Naive thymus-derived CD4-positive, alpha-beta T cell (primary cell): ENCODE measurements at regions of chr3 and their contacts with region 1.

Region 1: DNA sequence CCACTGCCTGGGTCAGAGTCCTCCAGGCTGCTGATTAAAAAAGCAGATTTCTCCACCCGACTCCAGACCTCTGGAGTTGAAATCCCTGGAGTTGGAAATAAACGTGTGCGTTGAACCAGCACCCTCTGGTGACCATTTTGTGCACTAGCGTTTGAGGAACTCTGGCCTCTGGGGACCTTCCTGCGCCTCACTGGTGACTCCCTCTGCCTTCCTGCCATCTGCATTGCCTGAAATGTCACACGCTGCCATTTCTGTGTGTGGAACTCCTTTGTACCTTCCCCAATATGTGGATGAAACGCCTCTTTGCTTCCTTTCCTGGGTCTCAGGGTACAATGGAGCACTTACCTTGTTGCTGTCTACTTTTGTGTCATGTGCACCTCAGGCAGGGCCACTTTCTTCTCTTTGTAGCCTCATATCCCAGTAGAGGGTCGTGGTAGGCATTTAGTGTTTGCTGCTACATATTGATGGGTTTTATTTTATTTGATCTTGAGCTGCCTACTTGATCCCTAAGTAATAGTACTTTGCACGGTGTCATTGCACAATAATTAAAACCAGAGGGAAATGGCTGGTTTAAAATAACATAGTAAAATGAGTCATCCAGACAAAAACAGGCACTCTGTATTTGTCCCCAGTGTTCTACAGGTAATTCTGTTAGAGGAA is 56.8 kb downstream of the GPR171 start:
- DNase-seq: peak; percentile 25 to 63 (median 36)
- ATAC-seq: peak; percentile 92
- H3K4me3 ChIP-seq: no peak overlapping the region
- H3K4me3 Mint-ChIP-seq: no peak overlapping the region
- H3K27ac ChIP-seq: no peak overlapping the region
- H3K27ac Mint-ChIP-seq: no peak overlapping the region
- H3K4me1 ChIP-seq: peaks cover 0 to 3% of the 10 kb centered on the region in 2 donors
- H3K4me1 Mint-ChIP-seq: peaks cover 0 to 4% (median 0%) of the 10 kb centered on the region in 7 donors
- H3K27me3 ChIP-seq: no peaks in the 10 kb centered on the region
- H3K27me3 Mint-ChIP-seq: peaks cover 0 to 29% (median 11%) of the 10 kb centered on the region in 5 donors

Region 2: DNA sequence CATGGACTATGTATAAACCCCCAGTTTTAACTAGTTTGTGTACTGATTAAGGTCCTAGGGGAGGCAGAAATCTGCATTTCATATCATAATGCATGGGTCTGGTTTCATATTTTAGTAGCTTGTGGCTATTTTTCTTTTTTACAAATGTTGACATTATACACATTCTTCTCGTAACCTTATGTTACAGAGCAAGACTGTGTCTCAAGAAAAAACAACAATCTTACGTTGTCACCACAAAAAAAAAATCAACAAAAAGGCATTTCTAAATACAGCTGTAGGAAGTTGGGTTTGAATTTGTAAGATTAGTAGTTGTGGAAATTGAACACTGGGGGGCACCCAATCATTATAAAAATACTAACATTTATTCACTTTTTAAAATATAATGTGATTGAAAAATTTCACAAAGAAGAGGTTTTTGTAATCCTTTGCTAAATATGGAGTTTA is 617.8 kb before region 1 on chr3:
- CTCF ChIA-PET with region 1: no interaction called
- POLR2A ChIA-PET with region 1: no interaction called
- intact Hi-C with region 1: loop called (anchors 1 to 5 kb)
- DNase-seq: peak in 4 of 9 donors; percentile 23 to 37 (median 28)
- ATAC-seq: peak; percentile 42
- H3K4me3 ChIP-seq: no peak overlapping the region
- H3K4me3 Mint-ChIP-seq: no peak overlapping the region
- H3K27ac ChIP-seq: no peak overlapping the region
- H3K27ac Mint-ChIP-seq: no peak overlapping the region
- H3K4me1 ChIP-seq: no peaks in the 10 kb centered on the region
- H3K4me1 Mint-ChIP-seq: peaks cover 0 to 8% (median 5%) of the 10 kb centered on the region in 7 donors
- H3K27me3 ChIP-seq: no peaks in the 10 kb centered on the region
- H3K27me3 Mint-ChIP-seq: peaks cover 0 to 21% (median 0%) of the 10 kb centered on the region in 5 donors

Region 3: GRCh38 chr3:150787741-150788370 is 358.3 kb before region 1 on chr3:
- CTCF ChIA-PET with region 1: interaction called, 5 read pairs
- POLR2A ChIA-PET with region 1: no interaction called
- intact Hi-C with region 1: loop called (anchors 1 kb)
- DNase-seq: peak; percentile 45 to 77 (median 63)
- ATAC-seq: peak; percentile 92
- H3K4me3 ChIP-seq: no peak overlapping the region
- H3K4me3 Mint-ChIP-seq: peak overlapping the region in 2 of 10 donors; percentile 24 to 50
- H3K27ac ChIP-seq: no peak overlapping the region
- H3K27ac Mint-ChIP-seq: no peak overlapping the region
- H3K4me1 ChIP-seq: no peaks in the 10 kb centered on the region
- H3K4me1 Mint-ChIP-seq: peaks cover 0 to 22% (median 4%) of the 10 kb centered on the region in 7 donors
- H3K27me3 ChIP-seq: no peaks in the 10 kb centered on the region
- H3K27me3 Mint-ChIP-seq: peaks cover 0 to 9% (median 4%) of the 10 kb centered on the region in 5 donors

Region 4: DNA sequence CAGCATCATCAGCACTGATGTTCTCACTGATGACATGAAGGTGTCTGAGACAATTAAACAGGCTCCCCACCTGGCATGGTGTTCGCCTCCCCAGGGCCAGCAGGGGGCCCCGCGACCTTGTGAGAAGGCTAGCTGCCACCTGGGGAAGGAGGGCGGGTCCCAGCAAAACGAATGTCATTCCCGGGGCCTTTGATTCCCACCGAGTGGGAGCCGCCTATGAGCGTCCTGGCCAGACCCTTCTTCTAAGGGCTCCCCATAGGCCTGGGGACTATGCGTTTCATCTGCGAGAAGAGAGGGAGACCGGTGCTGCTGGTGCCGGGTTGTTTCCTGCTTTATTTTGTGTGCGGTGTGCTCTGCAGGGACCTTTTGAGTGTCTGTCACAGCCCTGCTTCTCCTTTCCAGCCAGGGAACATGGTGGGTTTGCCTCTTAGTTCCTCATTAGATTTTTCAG is 220.4 kb before region 1 on chr3:
- CTCF ChIA-PET with region 1: interaction called, 11 read pairs
- POLR2A ChIA-PET with region 1: no interaction called
- intact Hi-C with region 1: loop called (anchors 1 kb)
- DNase-seq: peak; percentile 11 to 52 (median 29)
- ATAC-seq: peak; percentile 72
- H3K4me3 ChIP-seq: no peak overlapping the region
- H3K4me3 Mint-ChIP-seq: peak overlapping the region in 9 of 10 donors; percentile 29 to 77 (median 57)
- H3K27ac ChIP-seq: no peak overlapping the region
- H3K27ac Mint-ChIP-seq: peak overlapping the region in 1 of 9 donors; percentile 41
- H3K4me1 ChIP-seq: no peaks in the 10 kb centered on the region
- H3K4me1 Mint-ChIP-seq: peaks cover 0 to 9% (median 7%) of the 10 kb centered on the region in 7 donors
- H3K27me3 ChIP-seq: no peaks in the 10 kb centered on the region
- H3K27me3 Mint-ChIP-seq: peaks cover 14 to 33% (median 17%) of the 10 kb centered on the region in 5 donors

Region 5: GRCh38 chr3:151067158-151067557 is 79.0 kb before region 1 on chr3:
- CTCF ChIA-PET with region 1: interaction called, 6 read pairs
- POLR2A ChIA-PET with region 1: no interaction called
- intact Hi-C with region 1: loop called (anchors 1 kb)
- DNase-seq: no peak
- ATAC-seq: no peak
- H3K4me3 ChIP-seq: no peak overlapping the region
- H3K4me3 Mint-ChIP-seq: no peak overlapping the region
- H3K27ac ChIP-seq: no peak overlapping the region
- H3K27ac Mint-ChIP-seq: no peak overlapping the region
- H3K4me1 ChIP-seq: no peaks in the 10 kb centered on the region
- H3K4me1 Mint-ChIP-seq: no peaks in the 10 kb centered on the region
- H3K27me3 ChIP-seq: no peaks in the 10 kb centered on the region
- H3K27me3 Mint-ChIP-seq: peaks cover 10 to 18% (median 14%) of the 10 kb centered on the region in 5 donors